ENCODE measurements at regions of chr10 and their contacts with region 1.

Region 1: GRCh38 chr10:125060826-125061556 is 99.4 kb downstream of the CTBP2 start:
- DNase-seq: peak; percentile 72
- H3K4me3 ChIP-seq: no peak overlapping the region
- H3K27ac ChIP-seq: peak overlapping the region; percentile 33
- H3K4me1 ChIP-seq: peaks cover 70% of the 10 kb centered on the region
- H3K27me3 ChIP-seq: no peaks in the 10 kb centered on the region
- CTCF ChIP-seq: peak; percentile 89 to 91

Region 2: GRCh38 chr10:124992462-124993344 is 68.3 kb before region 1 on chr10:
- CTCF ChIA-PET with region 1: no interaction called
- dilution Hi-C with region 1: no loop called
- in situ Hi-C with region 1: no loop called
- intact Hi-C with region 1: loop called (anchors 2 kb)
- DNase-seq: peak; percentile 46
- H3K4me3 ChIP-seq: no peak overlapping the region
- H3K27ac ChIP-seq: no peak overlapping the region
- H3K4me1 ChIP-seq: peaks cover 4% of the 10 kb centered on the region
- H3K27me3 ChIP-seq: no peaks in the 10 kb centered on the region
- CTCF ChIP-seq: peak; percentile 48 to 51

Region 3: DNA sequence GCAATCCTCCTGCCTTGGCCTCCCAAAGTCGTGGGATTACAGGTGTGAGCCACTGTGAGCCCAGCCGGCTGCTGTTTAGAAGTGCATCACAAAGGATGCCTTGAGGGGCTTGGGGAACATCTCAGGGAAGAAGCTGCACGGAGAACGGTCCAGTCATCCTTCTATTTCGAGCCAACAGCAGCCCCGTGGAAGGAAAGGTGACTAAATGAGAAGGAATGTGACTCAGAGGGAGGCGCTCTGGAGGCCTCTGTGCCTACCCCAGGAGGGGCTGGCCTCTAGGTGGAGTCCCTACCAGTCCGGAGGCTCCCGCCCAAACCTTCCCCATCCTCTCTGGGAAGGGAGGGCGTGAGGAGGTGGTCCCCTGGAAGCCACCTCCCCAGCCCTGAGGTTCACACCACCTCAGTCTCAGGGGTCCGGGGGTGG is 23.2 kb after region 1 on chr10:
- CTCF ChIA-PET with region 1: interaction called, 3 read pairs
- dilution Hi-C with region 1: no loop called
- in situ Hi-C with region 1: no loop called
- intact Hi-C with region 1: loop called (anchors 1 kb)
- DNase-seq: peak; percentile 91
- H3K4me3 ChIP-seq: no peak overlapping the region
- H3K27ac ChIP-seq: peak overlapping the region; percentile 48
- H3K4me1 ChIP-seq: peaks cover 40% of the 10 kb centered on the region
- H3K27me3 ChIP-seq: no peaks in the 10 kb centered on the region
- CTCF ChIP-seq: peak; percentile 7 to 38

Region 4: GRCh38 chr10:125144693-125145623 is 84.0 kb after region 1 on chr10:
- CTCF ChIA-PET with region 1: no interaction called
- dilution Hi-C with region 1: no loop called
- in situ Hi-C with region 1: no loop called
- intact Hi-C with region 1: loop called (anchors 2 kb)
- DNase-seq: peak; percentile 65
- H3K4me3 ChIP-seq: no peak overlapping the region
- H3K27ac ChIP-seq: peak overlapping the region; percentile 34
- H3K4me1 ChIP-seq: peaks cover 46% of the 10 kb centered on the region
- H3K27me3 ChIP-seq: no peaks in the 10 kb centered on the region
- CTCF ChIP-seq: peak; percentile 35 to 70

Region 5: GRCh38 chr10:125368146-125368545 is 307.2 kb after region 1 on chr10:
- CTCF ChIA-PET with region 1: no interaction called
- dilution Hi-C with region 1: no loop called
- in situ Hi-C with region 1: no loop called
- intact Hi-C with region 1: no loop called
- DNase-seq: no peak
- H3K4me3 ChIP-seq: no peak overlapping the region
- H3K27ac ChIP-seq: no peak overlapping the region
- H3K4me1 ChIP-seq: no peaks in the 10 kb centered on the region
- H3K27me3 ChIP-seq: no peaks in the 10 kb centered on the region
- CTCF ChIP-seq: no peak

Region 6: GRCh38 chr10:125707541-125708468 is 646.8 kb after region 1 on chr10:
- CTCF ChIA-PET with region 1: no interaction called
- dilution Hi-C with region 1: no loop called
- in situ Hi-C with region 1: no loop called
- intact Hi-C with region 1: loop called (anchors 10 kb)
- DNase-seq: peak; percentile 26
- H3K4me3 ChIP-seq: no peak overlapping the region
- H3K27ac ChIP-seq: no peak overlapping the region
- H3K4me1 ChIP-seq: no peaks in the 10 kb centered on the region
- H3K27me3 ChIP-seq: no peaks in the 10 kb centered on the region
- CTCF ChIP-seq: no peak